GM12878 (cell line): ENCODE measurements at regions of chr7 and their contacts with region 1.

Region 1: GRCh38 chr7:126557271-126557670 is 695.5 kb downstream of the GRM8 start:
- DNase-seq: no peak
- ATAC-seq: peak; percentile 83
- H3K4me3 ChIP-seq: no peak overlapping the region; the same call in 1 of the 2 replicates
- H3K27ac ChIP-seq: peak overlapping the region; percentile 31; the same call in 1 of the 2 replicates
- H3K4me1 ChIP-seq: no peaks in the 10 kb centered on the region
- H3K27me3 ChIP-seq: no peaks in the 10 kb centered on the region
- CTCF ChIP-seq: no peak
- EP300 ChIP-seq: peak in 1 of 2 experiments; percentile 38; a peak in 1 of 4 replicates
- POLR2A ChIP-seq: no peak
- RAD21 ChIP-seq: no peak

Region 2: DNA sequence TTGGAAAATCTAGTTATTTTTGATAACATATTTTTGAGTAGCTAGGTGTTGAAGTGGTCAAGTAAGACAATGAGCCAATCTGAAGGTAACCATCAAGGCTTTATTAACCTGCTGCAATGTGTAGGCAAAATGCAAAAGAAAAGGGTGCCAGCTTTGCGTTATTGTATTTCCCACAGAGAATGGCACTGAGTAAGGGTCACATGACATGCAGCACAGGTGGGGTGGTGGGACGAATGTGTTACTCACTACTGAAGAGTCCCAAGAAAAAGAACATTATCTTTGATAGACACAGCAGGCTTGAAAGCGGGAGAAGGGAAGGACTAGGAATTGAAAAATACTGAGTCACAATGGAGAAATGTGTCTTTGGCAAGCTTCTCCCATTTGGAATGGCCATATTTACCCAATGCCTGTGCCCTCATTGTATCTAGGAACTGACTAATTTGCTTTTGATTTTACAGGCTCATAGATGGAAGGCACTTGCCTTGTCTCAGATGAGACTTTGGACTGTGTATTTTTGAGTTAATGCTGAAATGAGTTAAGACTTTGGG is 729.0 kb before region 1 on chr7:
- CTCF ChIA-PET with region 1: no interaction called
- POLR2A ChIA-PET with region 1: no interaction called
- RAD21 ChIA-PET with region 1: no interaction called
- SMC1A ChIA-PET with region 1: no interaction called
- in situ Hi-C with region 1: no loop called
- intact Hi-C with region 1: no loop called
- DNase-seq: no peak
- ATAC-seq: no peak
- H3K4me3 ChIP-seq: no peak overlapping the region
- H3K27ac ChIP-seq: no peak overlapping the region
- H3K4me1 ChIP-seq: no peaks in the 10 kb centered on the region
- H3K27me3 ChIP-seq: no peaks in the 10 kb centered on the region
- CTCF ChIP-seq: no peak
- EP300 ChIP-seq: no peak
- POLR2A ChIP-seq: no peak
- RAD21 ChIP-seq: no peak

Region 3: DNA sequence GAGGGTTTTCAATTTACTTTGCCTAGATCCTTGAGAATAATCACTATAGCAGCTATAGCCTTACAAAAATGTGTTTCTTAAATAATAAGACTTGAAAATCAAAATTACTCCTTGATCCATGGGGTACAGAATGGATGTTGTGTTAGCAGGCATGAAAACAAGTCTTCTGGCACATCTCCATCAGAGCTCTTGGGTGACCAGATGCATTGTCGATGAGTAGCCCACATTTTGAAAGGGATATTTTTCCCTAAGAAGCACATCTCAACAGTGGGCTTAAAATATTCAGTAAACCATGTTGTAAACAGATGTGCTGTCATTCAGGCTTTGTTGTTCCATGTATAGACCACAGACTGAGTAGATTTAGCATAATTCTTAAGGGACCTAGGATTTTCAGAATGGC is 132.3 kb before region 1 on chr7:
- CTCF ChIA-PET with region 1: no interaction called
- POLR2A ChIA-PET with region 1: no interaction called
- RAD21 ChIA-PET with region 1: no interaction called
- SMC1A ChIA-PET with region 1: no interaction called
- in situ Hi-C with region 1: no loop called
- intact Hi-C with region 1: no loop called
- DNase-seq: no peak
- ATAC-seq: no peak
- H3K4me3 ChIP-seq: no peak overlapping the region
- H3K27ac ChIP-seq: no peak overlapping the region
- H3K4me1 ChIP-seq: no peaks in the 10 kb centered on the region
- H3K27me3 ChIP-seq: no peaks in the 10 kb centered on the region
- CTCF ChIP-seq: no peak
- EP300 ChIP-seq: no peak
- POLR2A ChIP-seq: no peak
- RAD21 ChIP-seq: no peak

Region 4: DNA sequence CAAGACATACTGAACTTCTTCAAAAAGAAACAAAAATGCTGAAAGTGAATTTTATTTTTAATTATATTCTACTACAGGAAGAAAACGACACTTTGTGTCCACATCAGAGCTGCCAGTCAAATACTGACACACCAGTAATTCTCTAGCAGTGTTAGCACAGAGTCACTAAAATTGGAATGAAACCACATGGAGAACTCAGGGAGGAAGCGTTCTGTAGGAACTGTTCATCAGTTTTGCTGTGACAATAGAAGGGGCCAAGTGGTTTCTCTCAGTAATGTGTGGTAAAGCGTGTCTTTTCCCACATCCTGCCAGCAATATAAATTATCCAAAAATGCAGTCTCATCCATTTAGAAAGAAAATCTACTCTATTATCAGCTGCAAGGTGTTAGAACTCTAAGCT is 12.1 kb after region 1 on chr7:
- CTCF ChIA-PET with region 1: interaction called, 6 read pairs
- POLR2A ChIA-PET with region 1: no interaction called
- RAD21 ChIA-PET with region 1: interaction called, 11 read pairs
- SMC1A ChIA-PET with region 1: interaction called, 25 read pairs
- in situ Hi-C with region 1: no loop called
- intact Hi-C with region 1: no loop called
- DNase-seq: peak; percentile 23
- ATAC-seq: peak; percentile 66
- H3K4me3 ChIP-seq: no peak overlapping the region
- H3K27ac ChIP-seq: no peak overlapping the region; the same call in 1 of the 2 replicates
- H3K4me1 ChIP-seq: peaks cover 11% of the 10 kb centered on the region
- H3K27me3 ChIP-seq: no peaks in the 10 kb centered on the region
- CTCF ChIP-seq: no peak
- EP300 ChIP-seq: no peak
- POLR2A ChIP-seq: no peak
- RAD21 ChIP-seq: no peak